Activated CD4-positive, alpha-beta T cell treated with anti-CD3 and anti-CD28 coated beads for 36 hours (primary cell): ENCODE measurements at regions of chrX and their contacts with region 1.

Region 1: GRCh38 chrX:23782863-23783568 is at the start of gene SAT1:
- DNase-seq: peak; percentile 97
- ATAC-seq: peak; percentile 86
- H3K4me3 Mint-ChIP-seq: peak within 1 kb of the TSS; percentile 92
- H3K27ac Mint-ChIP-seq: peak within 1 kb of the TSS; percentile 97
- H3K4me1 Mint-ChIP-seq: peaks cover 28% of the 10 kb centered on the region
- H3K27me3 Mint-ChIP-seq: no peaks in the 10 kb centered on the region
- total RNA-seq, gene SAT1: 148 to 166 TPM

Region 2: DNA sequence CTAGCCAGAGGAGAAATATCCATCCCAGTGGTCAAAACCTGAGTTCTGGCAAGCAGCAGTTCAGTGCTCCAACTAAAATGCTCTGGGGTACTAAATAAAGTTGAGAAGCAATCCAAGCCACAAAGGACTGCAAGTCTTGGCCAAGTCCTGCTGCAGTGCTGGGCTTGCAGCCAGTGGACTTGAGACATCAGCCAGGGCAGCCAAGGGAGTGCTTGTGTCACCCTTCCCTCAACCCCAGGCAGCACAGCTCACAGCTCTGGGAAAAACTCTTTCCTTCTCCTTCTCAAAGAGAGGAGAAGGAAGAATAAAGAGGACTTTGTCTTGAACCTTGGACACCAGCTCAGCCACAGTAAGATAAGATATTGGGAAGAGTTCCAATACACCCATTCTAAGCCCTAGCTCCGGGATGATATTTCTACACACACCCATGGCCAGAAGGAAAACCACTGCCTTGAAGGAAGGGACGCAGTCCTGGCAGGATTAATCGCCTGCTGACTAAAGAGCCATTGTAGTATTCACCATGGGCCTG is 348.6 kb before region 1 on chrX:
- CTCF ChIA-PET with region 1: no interaction called
- POLR2A ChIA-PET with region 1: no interaction called
- intact Hi-C with region 1: no loop called
- DNase-seq: no peak
- ATAC-seq: no peak
- H3K4me3 Mint-ChIP-seq: no peak overlapping the region
- H3K27ac Mint-ChIP-seq: no peak overlapping the region
- H3K4me1 Mint-ChIP-seq: no peaks in the 10 kb centered on the region
- H3K27me3 Mint-ChIP-seq: no peaks in the 10 kb centered on the region

Region 3: DNA sequence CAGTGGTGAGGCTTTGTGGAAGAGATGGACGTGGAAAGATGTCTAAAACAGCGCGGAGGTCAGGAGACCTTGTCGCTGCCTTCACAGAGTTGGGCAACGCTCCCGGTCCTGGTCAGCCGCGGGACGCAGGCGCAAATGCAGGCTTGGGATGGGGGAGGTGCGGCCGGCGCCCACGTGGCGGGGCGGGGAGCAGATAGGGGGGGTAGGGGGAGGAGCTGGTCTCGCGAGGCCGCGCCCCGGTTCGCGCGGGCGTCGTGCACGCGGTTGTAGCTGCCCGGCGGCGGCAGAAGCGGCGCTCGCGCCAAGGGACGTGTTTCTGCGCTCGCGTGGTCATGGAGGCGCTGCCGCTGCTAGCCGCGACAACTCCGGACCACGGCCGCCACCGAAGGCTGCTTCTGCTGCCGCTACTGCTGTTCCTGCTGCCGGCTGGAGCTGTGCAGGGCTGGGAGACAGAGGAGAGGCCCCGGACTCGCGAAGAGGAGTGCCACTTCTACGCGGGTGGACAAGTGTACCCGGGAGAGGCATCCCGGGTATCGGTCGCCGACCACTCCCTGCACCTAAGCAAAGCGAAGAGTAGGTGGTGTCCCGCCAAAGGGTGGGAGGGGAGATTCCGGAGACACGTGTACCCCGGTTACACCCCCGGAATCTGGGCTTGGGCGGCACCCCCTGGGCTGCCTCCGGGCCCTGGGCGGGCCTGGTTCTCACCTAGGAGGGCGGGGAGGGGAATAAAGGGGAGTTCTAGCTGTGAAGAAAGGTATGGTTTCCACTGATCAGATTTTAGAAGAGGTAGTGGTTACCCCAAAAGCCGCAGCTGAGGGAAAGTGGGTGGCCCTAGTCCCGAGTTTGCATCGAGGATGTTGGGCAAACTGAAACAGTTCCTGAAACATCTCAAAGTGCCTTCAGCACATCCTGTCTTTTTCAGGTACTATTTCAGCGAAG is 115.5 kb before region 1 on chrX and contains the start of gene PRDX4:
- CTCF ChIA-PET with region 1: no interaction called
- POLR2A ChIA-PET with region 1: interaction called, 4 read pairs
- intact Hi-C with region 1: loop called (anchors 1 kb)
- DNase-seq: peak; percentile 90
- ATAC-seq: peak; percentile 67
- H3K4me3 Mint-ChIP-seq: peak within 1 kb of the TSS; percentile 83
- H3K27ac Mint-ChIP-seq: peak within 1 kb of the TSS; percentile 92
- H3K4me1 Mint-ChIP-seq: peaks cover 35% of the 10 kb centered on the region
- H3K27me3 Mint-ChIP-seq: no peaks in the 10 kb centered on the region
- total RNA-seq, gene PRDX4: 48.8 to 51.5 TPM

Region 4: DNA sequence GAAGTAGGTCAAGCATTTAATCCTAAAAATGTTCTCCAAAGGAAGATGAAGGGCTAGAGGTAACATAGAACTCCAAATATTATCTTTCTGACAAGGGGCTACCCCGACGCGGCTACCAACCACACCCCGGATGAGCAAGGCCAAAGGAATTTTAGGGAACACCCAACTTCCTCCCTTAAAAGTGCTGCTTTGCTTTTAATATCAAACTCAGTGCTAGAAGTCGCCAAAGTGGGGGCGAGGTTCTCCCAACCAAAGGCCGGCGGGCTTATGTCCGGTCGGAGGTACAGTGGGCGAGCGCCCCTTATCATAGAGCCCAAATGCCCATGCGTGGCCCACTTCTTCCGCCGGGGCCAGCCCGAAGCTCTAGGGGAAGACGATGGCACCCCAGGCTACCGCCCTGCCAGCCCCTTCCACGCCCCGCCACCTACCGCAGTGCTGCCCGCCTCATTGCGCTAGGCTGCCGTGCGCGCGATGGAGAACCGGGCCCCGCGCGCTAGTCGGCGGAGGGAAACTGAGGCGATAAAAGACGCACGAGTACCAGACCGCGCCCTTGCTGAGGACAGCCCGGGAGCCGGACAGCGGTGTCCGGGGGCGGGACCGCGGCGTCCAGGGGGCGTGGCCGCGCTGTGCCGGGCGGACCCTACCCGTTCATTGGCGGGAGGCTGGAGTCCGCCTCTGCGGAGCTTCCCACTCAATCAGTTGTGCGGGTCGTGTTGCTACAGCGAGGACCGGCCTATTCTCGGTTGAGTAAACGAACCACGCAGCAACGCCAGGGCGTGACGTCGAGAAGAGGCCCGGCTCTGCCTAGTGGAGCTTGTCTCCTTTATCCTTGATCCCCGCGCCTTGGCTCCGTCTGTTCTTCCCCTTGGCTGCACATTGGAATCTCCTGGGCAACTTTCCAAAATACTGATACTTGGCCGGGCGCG is 40.1 kb before region 1 on chrX and contains the start of gene ACOT9:
- CTCF ChIA-PET with region 1: interaction called, 5 read pairs
- POLR2A ChIA-PET with region 1: interaction called, 19 read pairs
- intact Hi-C with region 1: loop called in 1 of 2 experiments (anchors 1 kb)
- DNase-seq: peak; percentile 84
- ATAC-seq: peak; percentile 96
- H3K4me3 Mint-ChIP-seq: peak within 1 kb of the TSS; percentile 83
- H3K27ac Mint-ChIP-seq: peak within 1 kb of the TSS; percentile 86
- H3K4me1 Mint-ChIP-seq: peaks cover 24% of the 10 kb centered on the region
- H3K27me3 Mint-ChIP-seq: no peaks in the 10 kb centered on the region
- total RNA-seq, gene ACOT9: 31.7 to 39.9 TPM

Region 5: GRCh38 chrX:23844502-23845138 is 61.6 kb after region 1 on chrX:
- CTCF ChIA-PET with region 1: no interaction called
- POLR2A ChIA-PET with region 1: no interaction called
- intact Hi-C with region 1: no loop called
- DNase-seq: no peak
- ATAC-seq: no peak
- H3K4me3 Mint-ChIP-seq: no peak overlapping the region
- H3K27ac Mint-ChIP-seq: no peak overlapping the region
- H3K4me1 Mint-ChIP-seq: no peaks in the 10 kb centered on the region
- H3K27me3 Mint-ChIP-seq: no peaks in the 10 kb centered on the region

Region 6: GRCh38 chrX:23907498-23908218 is 124.6 kb after region 1 on chrX and contains the starts of genes APOO and CXorf58:
- CTCF ChIA-PET with region 1: interaction called, 28 read pairs
- POLR2A ChIA-PET with region 1: interaction called, 4 read pairs
- intact Hi-C with region 1: loop called (anchors 1 to 2 kb)
- DNase-seq: peak; percentile 95
- ATAC-seq: peak; percentile 94
- H3K4me3 Mint-ChIP-seq: peak within 1 kb of the TSS; percentile 75
- H3K27ac Mint-ChIP-seq: peak within 1 kb of the TSS; percentile 83
- H3K4me1 Mint-ChIP-seq: peaks cover 18% of the 10 kb centered on the region
- H3K27me3 Mint-ChIP-seq: no peaks in the 10 kb centered on the region
- total RNA-seq, gene APOO: 30.2 to 37.2 TPM
- total RNA-seq, gene CXorf58: 0.14 TPM in 1 of 2 experiments, not detected in the other

Region 7: DNA sequence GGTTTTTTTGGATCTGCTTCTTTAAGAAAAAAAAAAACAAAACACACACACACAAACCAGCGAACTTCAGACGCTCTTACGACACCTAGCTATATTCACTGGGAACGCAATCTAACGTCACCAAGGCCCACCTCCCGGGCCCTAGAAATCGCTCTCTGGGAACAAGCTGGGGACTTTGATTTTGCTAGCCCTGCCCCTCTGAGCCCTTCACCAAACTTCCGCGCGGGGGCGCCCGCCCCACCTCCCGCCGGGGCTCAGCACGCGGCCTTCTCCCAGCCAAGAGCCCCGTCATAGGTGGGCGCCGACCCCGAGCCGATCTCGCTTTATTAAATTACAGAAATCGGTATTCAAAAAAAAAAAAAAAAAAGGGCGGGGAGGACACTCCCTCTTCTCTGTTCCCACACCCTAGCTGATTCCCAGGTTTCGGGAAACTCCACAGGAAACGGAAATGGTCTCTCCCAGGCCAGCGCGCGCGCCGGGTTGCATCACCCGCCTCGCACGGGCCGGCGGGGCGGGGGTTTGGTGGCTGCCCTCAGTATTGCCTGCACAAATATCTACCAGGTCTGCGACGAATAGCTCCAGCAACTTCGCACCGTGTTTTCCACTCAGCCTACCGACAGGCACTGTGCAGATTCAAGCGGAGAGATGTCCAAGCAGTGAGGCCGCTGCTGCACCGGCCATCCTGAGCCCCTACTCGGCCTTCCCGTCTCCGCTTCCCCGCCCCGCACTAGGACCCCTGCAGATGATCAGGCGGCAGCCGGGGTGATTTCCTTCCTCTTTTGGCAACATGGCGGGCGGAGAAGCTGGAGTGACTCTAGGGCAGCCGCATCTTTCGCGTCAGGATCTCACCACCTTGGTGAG is 271.4 kb after region 1 on chrX and contains the start of gene EIF2S3:
- CTCF ChIA-PET with region 1: interaction called, 4 read pairs
- POLR2A ChIA-PET with region 1: interaction called, 12 read pairs
- intact Hi-C with region 1: loop called (anchors 1 to 5 kb)
- DNase-seq: peak; percentile 89
- ATAC-seq: peak; percentile 89
- H3K4me3 Mint-ChIP-seq: no peak within 1 kb of the TSS
- H3K27ac Mint-ChIP-seq: no peak within 1 kb of the TSS
- H3K4me1 Mint-ChIP-seq: peaks cover 7% of the 10 kb centered on the region
- H3K27me3 Mint-ChIP-seq: no peaks in the 10 kb centered on the region
- total RNA-seq, gene EIF2S3: 316 to 336 TPM

Region 8: DNA sequence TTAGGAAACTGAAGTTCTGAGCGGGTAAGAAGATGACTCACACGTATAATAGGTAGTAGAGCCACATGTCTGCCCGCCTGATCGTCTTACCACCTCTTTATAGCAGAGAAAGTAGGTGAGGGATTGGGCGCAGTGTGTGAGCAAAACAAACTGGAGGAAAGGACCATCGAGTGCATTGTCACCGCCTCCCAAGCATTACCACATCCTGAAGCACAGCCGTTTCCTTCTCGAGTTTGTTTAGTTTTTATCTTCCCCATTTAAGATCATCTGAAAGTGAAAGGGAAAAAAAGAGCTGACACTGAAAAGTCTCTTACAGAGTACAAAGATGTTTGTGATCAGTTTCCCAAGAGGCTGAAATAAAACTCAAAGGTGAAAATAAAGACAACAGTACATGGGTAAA is 696.9 kb after region 1 on chrX:
- CTCF ChIA-PET with region 1: no interaction called
- POLR2A ChIA-PET with region 1: interaction called, 5 read pairs
- intact Hi-C with region 1: loop called (anchors 2 to 10 kb)
- DNase-seq: peak; percentile 82
- ATAC-seq: peak; percentile 94
- H3K4me3 Mint-ChIP-seq: peak overlapping the region; percentile 68
- H3K27ac Mint-ChIP-seq: peak overlapping the region; percentile 91
- H3K4me1 Mint-ChIP-seq: peaks cover 75% of the 10 kb centered on the region
- H3K27me3 Mint-ChIP-seq: no peaks in the 10 kb centered on the region